Activated CD4-positive, alpha-beta T cell treated with anti-CD3 and anti-CD28 coated beads, Interleukin-2, amount 10 ng/mL, durations not matched to agents 24 days and 14 days (primary cell): ENCODE measurements at regions of chr9 and their contacts with region 1.

Region 1: GRCh38 chr9:129884220-129885017 is 49.2 kb downstream of the USP20 start:
- DNase-seq: peak; percentile 99
- H3K4me3 Mint-ChIP-seq: peak overlapping the region; percentile 83
- H3K27ac Mint-ChIP-seq: peak overlapping the region; percentile 98
- H3K4me1 Mint-ChIP-seq: peaks cover 51% of the 10 kb centered on the region
- H3K27me3 Mint-ChIP-seq: no peaks in the 10 kb centered on the region

Region 2: GRCh38 chr9:129823935-129824601 is 60.4 kb before region 1 on chr9 and contains the start of gene TOR1A:
- intact Hi-C with region 1: loop called (anchors 5 kb)
- DNase-seq: peak; percentile 98
- H3K4me3 Mint-ChIP-seq: peak within 1 kb of the TSS; percentile 89
- H3K27ac Mint-ChIP-seq: peak within 1 kb of the TSS; percentile 82
- H3K4me1 Mint-ChIP-seq: peaks cover 14% of the 10 kb centered on the region
- H3K27me3 Mint-ChIP-seq: no peaks in the 10 kb centered on the region
- total RNA-seq, gene TOR1A: 55.1 and 60.5 TPM in 2 replicates

Region 3: DNA sequence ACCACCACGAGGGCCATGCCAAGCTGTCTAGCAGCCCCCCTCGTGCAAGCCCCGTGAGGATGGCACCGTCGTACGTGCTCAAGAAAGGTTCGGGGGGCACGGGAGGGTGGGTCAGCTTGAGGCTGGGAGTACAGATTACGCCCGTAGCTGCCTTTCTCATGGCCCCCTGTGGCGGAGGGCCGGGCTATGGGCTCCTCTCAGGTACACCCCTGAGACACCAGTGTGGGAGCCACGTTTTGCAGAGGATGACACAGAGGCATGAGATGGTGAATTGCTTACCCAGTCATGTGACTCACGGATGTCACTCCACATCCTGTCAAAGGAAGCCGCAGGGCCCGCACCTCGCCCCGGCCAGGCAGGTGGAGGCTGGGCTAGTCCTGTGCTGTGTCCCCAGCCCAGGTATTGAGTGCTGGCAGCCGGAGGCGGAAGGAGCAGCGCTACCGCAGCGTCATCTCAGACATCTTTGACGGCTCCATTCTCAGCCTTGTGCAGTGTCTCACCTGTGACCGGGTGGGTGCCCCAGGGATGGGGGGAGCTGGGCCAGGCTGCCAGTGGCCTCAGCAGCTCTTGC is 15.4 kb before region 1 on chr9:
- intact Hi-C with region 1: loop called (anchors 2 kb)
- DNase-seq: peak; percentile 96
- H3K4me3 Mint-ChIP-seq: peak overlapping the region; percentile 61
- H3K27ac Mint-ChIP-seq: peak overlapping the region; percentile 92
- H3K4me1 Mint-ChIP-seq: peaks cover 56% of the 10 kb centered on the region
- H3K27me3 Mint-ChIP-seq: no peaks in the 10 kb centered on the region

Region 4: GRCh38 chr9:129962889-129963703 is 78.7 kb after region 1 on chr9:
- intact Hi-C with region 1: loop called (anchors 1 kb)
- DNase-seq: peak; percentile 93
- H3K4me3 Mint-ChIP-seq: peak overlapping the region; percentile 84
- H3K27ac Mint-ChIP-seq: peak overlapping the region; percentile 94
- H3K4me1 Mint-ChIP-seq: peaks cover 68% of the 10 kb centered on the region
- H3K27me3 Mint-ChIP-seq: no peaks in the 10 kb centered on the region

Region 5: GRCh38 chr9:130042833-130043653 is 158.6 kb after region 1 on chr9 and contains the start of gene FNBP1:
- intact Hi-C with region 1: loop called (anchors 1 kb)
- DNase-seq: peak; percentile 94
- H3K4me3 Mint-ChIP-seq: peak within 1 kb of the TSS; percentile 94
- H3K27ac Mint-ChIP-seq: peak within 1 kb of the TSS; percentile 93
- H3K4me1 Mint-ChIP-seq: peaks cover 39% of the 10 kb centered on the region
- H3K27me3 Mint-ChIP-seq: no peaks in the 10 kb centered on the region
- total RNA-seq, gene FNBP1: 245 TPM in 2 replicates

Region 6: DNA sequence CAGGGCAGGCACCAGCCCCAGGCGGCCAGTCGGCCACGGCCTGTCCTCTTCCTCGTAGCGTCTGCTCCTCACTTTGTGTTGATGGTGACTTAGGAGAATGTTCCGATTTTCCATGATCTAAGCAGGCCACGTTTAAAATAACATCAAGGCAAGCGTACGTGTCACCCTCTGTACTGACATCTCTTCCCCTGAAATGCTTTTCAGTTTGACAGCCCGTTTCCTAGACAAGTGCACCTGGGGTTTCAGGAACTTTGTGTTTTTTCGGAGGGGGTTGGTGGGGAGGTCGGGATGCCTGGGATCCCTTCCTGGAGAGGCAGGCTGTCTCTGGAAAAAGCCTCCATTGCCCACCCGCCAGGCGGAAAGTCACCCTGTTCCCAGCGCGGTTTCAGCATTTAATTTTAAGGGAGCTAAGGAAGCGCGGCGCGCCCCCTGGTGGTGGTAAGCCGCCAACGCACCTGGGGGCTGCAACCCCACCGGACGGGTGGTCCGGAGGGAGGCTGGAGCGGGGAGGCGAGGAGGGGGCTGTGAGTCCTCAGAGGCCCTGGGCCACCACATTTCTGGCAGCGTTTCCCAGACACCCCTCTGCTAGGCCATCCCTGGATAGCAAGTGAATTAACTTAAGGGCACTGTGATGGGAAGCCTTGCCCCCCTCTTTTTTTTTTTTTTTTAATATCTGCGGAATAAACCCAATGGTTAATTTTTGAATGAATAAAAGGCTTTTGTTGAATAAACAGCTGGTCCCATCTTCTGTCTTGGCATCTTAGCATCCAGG is 351.7 kb after region 1 on chr9:
- intact Hi-C with region 1: loop called (anchors 10 kb)
- DNase-seq: peak; percentile 91
- H3K4me3 Mint-ChIP-seq: peak overlapping the region; percentile 39
- H3K27ac Mint-ChIP-seq: no peak overlapping the region
- H3K4me1 Mint-ChIP-seq: peaks cover 18% of the 10 kb centered on the region
- H3K27me3 Mint-ChIP-seq: no peaks in the 10 kb centered on the region